ENCODE measurements at regions of chr11 and their contacts with region 1.

Region 1: GRCh38 chr11:125625630-125626287 is 796 bp downstream of the CHEK1 start:
- DNase-seq: peak; percentile 78

Region 2: DNA sequence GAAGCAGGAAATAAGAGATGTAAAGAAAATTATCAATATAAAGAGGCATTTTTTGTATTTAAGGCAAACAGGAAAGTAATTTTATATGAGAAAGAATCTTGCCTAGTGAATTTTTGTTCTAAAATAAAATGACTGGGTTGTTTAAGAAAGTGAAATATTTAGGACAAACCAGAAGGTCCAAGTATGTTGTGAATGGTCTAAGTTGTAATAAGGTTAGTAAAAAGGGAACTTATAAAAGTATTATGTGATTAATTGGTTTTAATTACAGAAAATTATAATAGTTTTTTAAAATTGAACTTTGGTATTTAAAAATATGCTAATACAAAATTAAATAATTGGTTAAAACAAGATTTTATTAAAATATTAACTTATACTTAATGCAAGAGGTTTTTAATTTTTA is 83.0 kb before region 1 on chr11:
- CTCF ChIA-PET with region 1: no interaction called
- POLR2A ChIA-PET with region 1: no interaction called
- DNase-seq: no peak

Region 3: DNA sequence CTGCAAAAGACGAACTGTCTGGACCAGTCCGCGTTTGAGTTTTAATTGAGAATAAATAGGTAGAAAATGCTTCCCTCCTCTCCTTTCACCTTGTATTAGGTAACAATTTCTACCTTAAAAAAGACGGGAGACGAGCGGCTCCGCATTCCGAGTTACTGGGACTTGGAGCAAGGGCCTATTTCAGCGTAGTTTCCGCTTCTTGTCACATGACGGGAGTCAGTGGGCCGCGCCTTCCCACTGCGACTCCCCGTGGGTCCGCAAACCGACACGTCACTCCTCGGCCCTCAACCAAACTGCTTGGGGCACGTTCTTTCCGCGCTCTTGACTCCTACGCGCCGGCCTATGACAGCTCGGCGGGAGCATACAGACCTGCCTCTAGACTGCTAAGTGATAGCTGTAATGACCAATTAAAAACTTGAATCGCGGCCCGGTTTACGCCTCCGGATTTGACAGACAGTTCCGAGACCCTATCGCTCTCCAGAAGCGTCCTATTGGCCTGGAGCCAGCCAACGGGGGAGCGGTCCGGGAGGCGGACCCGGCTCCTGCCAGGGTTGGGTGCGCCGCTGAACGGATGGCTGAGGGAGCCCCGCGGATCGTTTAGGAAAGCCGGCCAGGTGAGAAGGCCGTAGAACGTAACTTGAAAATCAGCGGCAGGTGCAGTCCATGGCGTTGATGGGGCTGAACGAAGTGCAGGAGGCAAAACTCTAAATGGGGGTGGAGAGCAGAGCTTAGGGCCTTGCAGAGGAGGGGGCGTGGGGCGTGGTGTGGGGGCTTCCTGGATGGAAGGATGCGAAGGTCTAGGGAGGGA is 33.2 kb before region 1 on chr11 and contains the start of gene STT3A:
- CTCF ChIA-PET with region 1: no interaction called
- POLR2A ChIA-PET with region 1: interaction called, 22 read pairs
- DNase-seq: peak; percentile 95

Region 4: GRCh38 chr11:125675196-125675595 is 49.4 kb after region 1 on chr11:
- CTCF ChIA-PET with region 1: no interaction called
- POLR2A ChIA-PET with region 1: no interaction called
- DNase-seq: no peak

Measured in HEK293T (cell line).